ENCODE measurements at regions of chr3 and their contacts with region 1.

Region 1: GRCh38 chr3:136861890-136862616 is at the start of gene NCK1:
- DNase-seq: peak; percentile 99 to 100 (median 99)
- H3K4me3 ChIP-seq: peak within 1 kb of the TSS; percentile 66 to 98 (median 92)
- H3K27ac ChIP-seq: peak within 1 kb of the TSS in 58 of 59 donors; percentile 54 to 95 (median 88)
- H3K27me3 ChIP-seq: no peaks in the 10 kb centered on the region
- CTCF ChIP-seq: peak in 35 of 56 donors; percentile 4 to 58 (median 28)
- total RNA-seq, gene NCK1: 15.6 to 40.2 (median 26.0) TPM

Region 2: DNA sequence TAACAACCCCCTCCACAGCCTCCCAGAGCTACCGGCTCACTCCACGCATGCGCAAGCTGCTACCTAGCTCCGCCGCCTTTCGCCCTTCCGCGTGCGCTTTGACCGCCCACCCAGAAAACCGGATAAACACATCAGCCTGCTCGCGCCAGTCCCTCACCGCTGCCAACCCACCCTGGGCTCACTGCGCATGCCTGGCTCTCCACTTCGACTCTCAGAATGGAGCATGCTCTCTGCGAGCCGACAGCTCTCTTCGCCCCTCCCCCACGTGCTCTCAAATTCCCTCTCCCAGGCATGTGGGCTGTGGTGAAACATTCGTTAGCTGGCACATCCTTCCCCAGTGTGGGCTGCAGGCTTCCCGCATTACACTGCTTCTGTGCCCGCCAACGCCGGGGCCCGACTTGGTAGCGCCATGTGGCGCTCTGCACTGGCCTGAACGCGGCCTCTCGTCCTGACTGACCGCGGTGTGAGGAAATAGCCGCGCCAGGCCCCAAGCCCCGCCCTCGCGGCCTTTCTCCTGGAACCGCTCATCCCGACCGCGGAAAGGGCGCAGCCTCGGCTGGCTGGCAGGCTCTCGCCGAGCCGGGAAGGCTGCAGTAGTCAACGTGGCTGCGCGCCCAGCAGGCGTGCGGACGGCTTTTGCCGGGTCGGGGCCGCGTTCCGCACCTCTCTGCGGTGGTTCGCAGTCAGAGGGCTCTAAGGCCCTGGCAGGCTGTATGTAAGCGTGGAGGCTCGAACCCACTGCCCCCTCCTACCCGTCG is 665.5 kb before region 1 on chr3:
- intact Hi-C with region 1: loop called in 1 of 2 experiments (anchors 10 kb)
- DNase-seq: peak; percentile 93 to 97 (median 95)
- H3K4me3 ChIP-seq: peak overlapping the region; percentile 66 to 98 (median 91)
- H3K27ac ChIP-seq: peak overlapping the region; percentile 91 to 100 (median 100)
- H3K27me3 ChIP-seq: no peaks in the 10 kb centered on the region
- CTCF ChIP-seq: peak in 17 of 56 donors; percentile 4 to 45 (median 19)

Region 3: GRCh38 chr3:136831461-136831860 is 30.6 kb before region 1 on chr3:
- intact Hi-C with region 1: loop called in 1 of 2 experiments (anchors 2 kb)
- DNase-seq: no peak
- H3K4me3 ChIP-seq: no peak overlapping the region
- H3K27ac ChIP-seq: no peak overlapping the region
- H3K27me3 ChIP-seq: no peaks in the 10 kb centered on the region
- CTCF ChIP-seq: no peak

Region 4: GRCh38 chr3:136994772-136995516 is 132.9 kb after region 1 on chr3:
- intact Hi-C with region 1: loop called in 1 of 2 experiments (anchors 5 kb)
- DNase-seq: peak in 9 of 10 donors; percentile 52 to 84 (median 78)
- H3K4me3 ChIP-seq: peak overlapping the region in 4 of 59 donors; percentile 1 to 9 (median 6)
- H3K27ac ChIP-seq: peak overlapping the region; percentile 13 to 90 (median 76)
- H3K27me3 ChIP-seq: no peaks in the 10 kb centered on the region
- CTCF ChIP-seq: peak in 1 of 56 donors; percentile 16

Region 5: DNA sequence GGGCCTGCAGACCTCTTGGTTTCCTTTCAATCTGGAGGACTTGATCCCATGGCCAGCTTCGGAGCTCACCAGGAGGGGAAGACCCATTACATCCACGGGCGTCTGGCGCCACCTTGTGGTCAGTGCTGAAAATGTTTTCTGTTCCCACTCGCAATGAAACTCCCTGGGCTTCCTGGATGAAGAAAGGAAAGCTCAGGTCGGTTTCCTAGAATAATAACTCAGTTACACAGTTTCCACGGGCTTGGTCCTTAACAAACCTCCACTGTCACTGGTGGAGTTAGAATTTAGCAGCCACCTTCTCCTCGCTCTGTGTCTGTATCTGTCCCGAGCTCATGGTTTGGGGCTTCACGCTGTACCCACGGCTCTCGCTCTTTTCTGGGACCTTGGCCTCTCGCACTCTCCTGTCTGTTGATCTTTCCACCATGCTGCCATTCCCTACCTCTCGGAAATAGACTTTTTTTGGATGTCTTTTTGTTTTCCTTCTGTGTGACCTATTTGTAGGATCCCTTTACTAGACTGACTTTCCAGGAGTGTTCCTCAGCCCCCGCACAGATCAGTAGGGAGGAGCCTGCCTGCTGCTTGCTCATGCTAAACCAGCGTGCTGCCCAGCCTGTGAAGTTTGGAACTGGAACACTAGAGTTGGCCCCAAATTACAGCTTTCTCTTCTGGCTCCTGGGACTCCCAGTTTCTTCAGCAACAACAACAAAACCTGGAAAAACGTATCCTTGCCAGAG is 152.1 kb after region 1 on chr3:
- intact Hi-C with region 1: loop called in 1 of 2 experiments (anchors 5 kb)
- DNase-seq: peak; percentile 86 to 95 (median 92)
- H3K4me3 ChIP-seq: peak overlapping the region; percentile 11 to 71 (median 53)
- H3K27ac ChIP-seq: peak overlapping the region in 28 of 59 donors; percentile 1 to 83 (median 42)
- H3K27me3 ChIP-seq: no peaks in the 10 kb centered on the region
- CTCF ChIP-seq: peak; percentile 89 to 99 (median 96)

Region 6: GRCh38 chr3:137438561-137438960 is 576.5 kb after region 1 on chr3:
- intact Hi-C with region 1: no loop called
- DNase-seq: no peak
- H3K4me3 ChIP-seq: no peak overlapping the region
- H3K27ac ChIP-seq: no peak overlapping the region
- H3K27me3 ChIP-seq: no peaks in the 10 kb centered on the region
- CTCF ChIP-seq: no peak

Measured in dorsolateral prefrontal cortex (tissue), 120 donors.